PC-3 (cell line): ENCODE measurements at regions of chr7 and their contacts with region 1.

Region 1: DNA sequence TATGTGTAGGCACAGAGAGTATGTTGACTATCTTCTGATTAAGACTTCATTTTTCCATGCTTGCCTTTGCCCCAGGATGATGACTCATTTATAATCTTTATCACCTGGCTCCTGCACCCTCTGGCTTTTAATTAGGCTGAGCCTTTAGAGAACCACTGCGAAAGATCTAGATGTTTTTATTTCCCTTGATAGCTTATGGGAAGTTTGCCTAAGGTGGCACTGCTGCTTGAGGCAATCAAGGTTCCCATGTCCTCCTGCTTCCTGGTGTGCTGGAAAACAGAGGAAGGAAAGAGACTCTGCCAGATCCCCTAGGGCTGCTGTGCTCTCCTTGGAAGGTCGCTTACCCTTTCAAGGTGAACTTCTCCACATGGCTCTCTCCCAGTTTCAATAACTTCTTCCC is 114.7 kb downstream of the ARL4A start:
- DNase-seq: peak; percentile 33
- ATAC-seq: peak; percentile 39
- H3K4me3 ChIP-seq: peak overlapping the region; percentile 44; the same call in 1 of the 2 replicates
- H3K27ac ChIP-seq: peak overlapping the region; percentile 60
- H3K4me1 ChIP-seq: peaks cover 41% of the 10 kb centered on the region
- H3K27me3 ChIP-seq: no peaks in the 10 kb centered on the region
- CTCF ChIP-seq: no peak

Region 2: GRCh38 chr7:12747687-12748306 is 54.3 kb before region 1 on chr7:
- CTCF ChIA-PET with region 1: no interaction called
- POLR2A ChIA-PET with region 1: no interaction called
- intact Hi-C with region 1: no loop called
- DNase-seq: peak; percentile 77
- ATAC-seq: peak; percentile 78
- H3K4me3 ChIP-seq: no peak overlapping the region
- H3K27ac ChIP-seq: peak overlapping the region; percentile 62; the same call in 1 of the 2 replicates
- H3K4me1 ChIP-seq: peaks cover 8% of the 10 kb centered on the region
- H3K27me3 ChIP-seq: no peaks in the 10 kb centered on the region
- CTCF ChIP-seq: no peak

Region 3: DNA sequence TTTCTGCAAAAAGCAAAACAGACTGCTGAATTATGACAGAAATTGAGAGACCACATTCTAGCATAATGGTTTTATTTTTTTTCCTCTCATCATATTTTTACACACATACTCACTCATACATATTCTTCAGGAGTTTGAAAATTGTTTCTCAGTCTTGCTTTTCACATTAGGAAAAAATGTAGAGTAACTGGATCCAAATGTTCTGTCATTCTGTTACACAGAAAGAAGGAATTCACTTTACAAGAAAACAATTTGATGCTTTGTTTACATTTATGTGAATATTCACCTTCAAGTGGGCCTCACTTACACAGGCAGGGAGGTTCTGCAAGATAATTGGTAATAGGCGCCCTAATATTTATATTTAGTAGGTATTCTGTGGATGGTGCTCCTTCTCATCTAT is 32.7 kb before region 1 on chr7:
- CTCF ChIA-PET with region 1: no interaction called
- POLR2A ChIA-PET with region 1: no interaction called
- intact Hi-C with region 1: loop called (anchors 5 kb)
- DNase-seq: peak; percentile 72
- ATAC-seq: peak; percentile 76
- H3K4me3 ChIP-seq: peak overlapping the region; percentile 21; the same call in 1 of the 2 replicates
- H3K27ac ChIP-seq: peak overlapping the region; percentile 25
- H3K4me1 ChIP-seq: peaks cover 37% of the 10 kb centered on the region
- H3K27me3 ChIP-seq: no peaks in the 10 kb centered on the region
- CTCF ChIP-seq: no peak

Region 4: GRCh38 chr7:12827920-12828319 is 25.8 kb after region 1 on chr7:
- CTCF ChIA-PET with region 1: no interaction called
- POLR2A ChIA-PET with region 1: no interaction called
- intact Hi-C with region 1: loop called (anchors 1 kb)
- DNase-seq: peak; percentile 36
- ATAC-seq: no peak
- H3K4me3 ChIP-seq: no peak overlapping the region
- H3K27ac ChIP-seq: peak overlapping the region; percentile 58
- H3K4me1 ChIP-seq: peaks cover 16% of the 10 kb centered on the region
- H3K27me3 ChIP-seq: no peaks in the 10 kb centered on the region
- CTCF ChIP-seq: no peak

Region 5: DNA sequence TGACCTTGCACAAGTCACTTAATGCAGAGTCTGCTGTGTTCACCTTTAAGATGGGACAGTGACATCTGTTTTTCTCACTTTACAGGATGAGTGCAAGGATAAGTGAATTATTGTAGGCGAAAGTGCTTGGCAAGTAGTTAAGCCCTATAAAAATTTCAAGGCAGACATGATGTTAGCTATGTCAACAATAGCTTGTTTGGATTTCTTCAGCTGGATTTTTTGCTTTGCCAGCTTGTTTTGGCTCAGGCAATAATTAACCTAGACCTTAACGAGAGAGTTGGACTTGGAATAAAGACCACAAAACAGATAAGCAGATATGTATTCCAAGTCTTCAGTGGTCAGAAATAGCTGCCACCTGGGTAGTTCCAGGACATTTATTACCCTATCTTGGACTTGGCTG is 140.5 kb after region 1 on chr7:
- CTCF ChIA-PET with region 1: no interaction called
- POLR2A ChIA-PET with region 1: no interaction called
- intact Hi-C with region 1: loop called (anchors 5 kb)
- DNase-seq: peak; percentile 62
- ATAC-seq: peak; percentile 82
- H3K4me3 ChIP-seq: no peak overlapping the region
- H3K27ac ChIP-seq: no peak overlapping the region
- H3K4me1 ChIP-seq: peaks cover 33% of the 10 kb centered on the region
- H3K27me3 ChIP-seq: no peaks in the 10 kb centered on the region
- CTCF ChIP-seq: no peak

Region 6: GRCh38 chr7:13179102-13179501 is 377.0 kb after region 1 on chr7:
- CTCF ChIA-PET with region 1: no interaction called
- POLR2A ChIA-PET with region 1: no interaction called
- intact Hi-C with region 1: loop called (anchors 1 kb)
- DNase-seq: peak; percentile 30
- ATAC-seq: peak; percentile 60
- H3K4me3 ChIP-seq: no peak overlapping the region
- H3K27ac ChIP-seq: no peak overlapping the region
- H3K4me1 ChIP-seq: peaks cover 18% of the 10 kb centered on the region
- H3K27me3 ChIP-seq: no peaks in the 10 kb centered on the region
- CTCF ChIP-seq: peak; percentile 48; the same call in 1 of the 2 replicates